Activated CD8-positive, alpha-beta T cell treated with anti-CD3 and anti-CD28 coated beads for 36 hours (primary cell): ENCODE measurements at regions of chr10 and their contacts with region 1.

Region 1: DNA sequence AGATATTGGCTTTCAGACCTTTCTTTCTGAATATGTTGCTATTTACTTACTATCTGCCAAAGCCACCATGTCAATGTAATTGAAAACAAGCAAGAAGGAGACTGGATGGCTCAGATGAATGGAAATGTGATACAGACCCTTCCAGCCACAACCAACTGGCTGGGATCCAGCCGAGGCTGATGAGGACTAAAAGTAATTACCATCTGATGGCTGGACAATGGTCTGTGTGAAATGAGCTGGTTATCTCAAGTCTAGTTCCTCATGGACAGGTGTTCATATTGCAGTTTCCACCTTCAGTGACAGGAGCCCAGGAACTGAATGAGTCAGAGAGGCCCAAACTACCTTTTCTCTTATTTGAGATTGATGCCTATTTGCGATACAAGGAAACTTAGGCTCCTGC is 267.5 kb downstream of the GATA3 start:
- DNase-seq: no peak
- ATAC-seq: no peak
- H3K4me3 Mint-ChIP-seq: no peak overlapping the region
- H3K27ac Mint-ChIP-seq: no peak overlapping the region
- H3K4me1 Mint-ChIP-seq: peaks cover 25% of the 10 kb centered on the region
- H3K27me3 Mint-ChIP-seq: peaks cover 1% of the 10 kb centered on the region
- CTCF ChIP-seq: no peak

Region 2: GRCh38 chr10:8245131-8245813 is 76.7 kb before region 1 on chr10:
- CTCF ChIA-PET with region 1: no interaction called
- POLR2A ChIA-PET with region 1: no interaction called
- intact Hi-C with region 1: loop called (anchors 10 kb)
- DNase-seq: peak; percentile 22
- ATAC-seq: no peak
- H3K4me3 Mint-ChIP-seq: peak overlapping the region; percentile 49
- H3K27ac Mint-ChIP-seq: peak overlapping the region; percentile 79
- H3K4me1 Mint-ChIP-seq: peaks cover 53% of the 10 kb centered on the region
- H3K27me3 Mint-ChIP-seq: no peaks in the 10 kb centered on the region
- CTCF ChIP-seq: no peak